K562 (cell line): ENCODE measurements at regions of chr5 and their contacts with region 1.

Region 1: DNA sequence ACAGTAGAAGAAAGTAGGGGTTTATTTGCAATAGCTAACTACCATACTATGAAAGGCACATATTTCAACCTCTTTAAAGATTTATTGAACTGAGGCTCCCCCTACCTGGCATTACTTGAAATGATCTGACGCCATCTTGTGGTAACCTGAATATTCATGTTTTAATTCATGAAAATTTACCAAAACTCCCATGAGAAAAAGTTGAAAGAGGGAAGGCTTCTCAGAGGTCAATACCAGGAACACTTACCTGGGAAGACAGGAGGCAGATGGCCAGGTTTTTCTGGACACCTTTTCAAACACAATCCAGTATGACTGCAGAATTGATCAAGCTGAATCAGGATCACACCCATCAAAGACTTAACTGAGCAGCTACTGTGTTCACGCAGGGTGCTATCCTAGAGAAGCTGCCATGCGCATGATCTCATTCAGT is 9.4 kb downstream of the PRELID2 start:
- DNase-seq: peak; percentile 37 to 69 (median 41)
- ATAC-seq: peak; percentile 75
- H3K4me3 ChIP-seq: no peak overlapping the region
- H3K27ac ChIP-seq: no peak overlapping the region
- H3K4me1 ChIP-seq: peaks cover 3 to 21% of the 10 kb centered on the region in 2 experiments; a peak in 3 of 5 replicates
- H3K27me3 ChIP-seq: no peaks in the 10 kb centered on the region
- CTCF ChIP-seq: peak; percentile 77 to 99 (median 97)
- EP300 ChIP-seq: no peak
- POLR2A ChIP-seq: no peak
- RAD21 ChIP-seq: peak; percentile 79 to 80

Region 2: DNA sequence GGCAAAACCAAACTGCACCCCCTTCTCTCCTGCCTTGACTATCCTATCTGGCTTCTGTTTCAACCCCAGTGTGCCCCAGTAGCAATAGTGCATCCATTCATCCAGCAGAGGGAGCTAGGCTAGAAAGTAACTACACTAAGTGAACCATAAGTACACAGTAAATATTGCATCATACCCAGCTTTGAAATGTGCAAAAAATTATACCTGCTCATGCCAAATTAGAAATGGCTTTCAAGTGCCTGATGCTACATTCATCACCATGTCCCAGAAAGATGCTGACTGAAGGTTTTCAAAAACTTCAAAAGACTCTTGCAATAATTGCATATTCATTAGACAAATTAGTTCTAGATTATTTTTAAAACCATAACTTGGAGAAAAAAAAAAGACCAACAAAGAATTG is 144.1 kb before region 1 on chr5:
- CTCF ChIA-PET with region 1: interaction called, 3 read pairs
- POLR2A ChIA-PET with region 1: no interaction called
- in situ Hi-C with region 1: no loop called
- intact Hi-C with region 1: loop called (anchors 2 kb)
- DNase-seq: peak; percentile 73 to 80 (median 76)
- ATAC-seq: peak; percentile 98
- H3K4me3 ChIP-seq: no peak overlapping the region
- H3K27ac ChIP-seq: no peak overlapping the region
- H3K4me1 ChIP-seq: peaks cover 0 to 10% of the 10 kb centered on the region in 2 experiments; a peak in 2 of 5 replicates
- H3K27me3 ChIP-seq: no peaks in the 10 kb centered on the region
- CTCF ChIP-seq: peak; percentile 78 to 87 (median 84)
- EP300 ChIP-seq: peak; percentile 57; the same call in 1 of the 2 replicates
- POLR2A ChIP-seq: no peak
- RAD21 ChIP-seq: peak; percentile 82 to 87

Region 3: GRCh38 chr5:145764325-145764724 is 61.4 kb before region 1 on chr5:
- CTCF ChIA-PET with region 1: no interaction called
- POLR2A ChIA-PET with region 1: no interaction called
- in situ Hi-C with region 1: no loop called
- intact Hi-C with region 1: no loop called
- DNase-seq: no peak
- ATAC-seq: no peak
- H3K4me3 ChIP-seq: no peak overlapping the region
- H3K27ac ChIP-seq: no peak overlapping the region
- H3K4me1 ChIP-seq: no peaks in the 10 kb centered on the region
- H3K27me3 ChIP-seq: no peaks in the 10 kb centered on the region
- CTCF ChIP-seq: no peak
- EP300 ChIP-seq: no peak
- POLR2A ChIP-seq: no peak
- RAD21 ChIP-seq: no peak

Region 4: GRCh38 chr5:145859897-145860296 is 34.1 kb after region 1 on chr5:
- CTCF ChIA-PET with region 1: no interaction called
- POLR2A ChIA-PET with region 1: interaction called, 5 read pairs
- in situ Hi-C with region 1: no loop called
- intact Hi-C with region 1: loop called (anchors 5 kb)
- DNase-seq: peak in 3 of 4 experiments; percentile 25 to 37 (median 32)
- ATAC-seq: peak; percentile 67
- H3K4me3 ChIP-seq: no peak overlapping the region
- H3K27ac ChIP-seq: no peak overlapping the region
- H3K4me1 ChIP-seq: peaks cover 19 to 35% of the 10 kb centered on the region in 2 experiments
- H3K27me3 ChIP-seq: no peaks in the 10 kb centered on the region
- CTCF ChIP-seq: peak; percentile 28 to 53 (median 43); a peak in 3 of 6 replicates
- EP300 ChIP-seq: no peak
- POLR2A ChIP-seq: no peak
- RAD21 ChIP-seq: peak in 1 of 2 experiments; percentile 16; a peak in 2 of 4 replicates